ENCODE measurements at regions of chr2 and their contacts with region 1.

Region 1: DNA sequence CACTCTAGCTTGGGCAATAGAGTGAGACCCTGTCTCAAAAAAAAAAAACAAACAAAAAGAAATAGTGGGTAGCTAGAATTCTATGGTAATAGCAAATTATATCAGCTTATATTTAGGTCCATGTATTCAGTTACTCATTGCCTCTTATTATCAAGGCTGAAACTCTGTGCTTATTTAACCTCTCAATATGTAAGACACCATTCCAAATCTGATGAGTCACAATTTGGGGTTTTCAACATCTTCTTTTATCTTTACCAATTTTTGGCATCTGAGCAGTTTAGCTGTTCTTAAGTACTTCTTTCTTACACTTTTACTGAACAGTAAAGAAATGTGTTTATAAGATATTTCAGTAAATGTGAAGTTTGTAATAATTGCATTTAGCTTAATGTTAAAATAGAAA is 69.3 kb downstream of the TTC27 start:
- DNase-seq: no peak
- H3K4me3 ChIP-seq: no peak overlapping the region
- H3K27ac ChIP-seq: no peak overlapping the region
- H3K4me1 ChIP-seq: no peaks in the 10 kb centered on the region
- H3K27me3 ChIP-seq: no peaks in the 10 kb centered on the region
- CTCF ChIP-seq: no peak

Region 2: GRCh38 chr2:32222966-32223365 is 474.2 kb before region 1 on chr2:
- CTCF ChIA-PET with region 1: no interaction called
- POLR2A ChIA-PET with region 1: no interaction called
- intact Hi-C with region 1: no loop called
- DNase-seq: no peak
- H3K4me3 ChIP-seq: no peak overlapping the region
- H3K27ac ChIP-seq: no peak overlapping the region
- H3K4me1 ChIP-seq: no peaks in the 10 kb centered on the region
- H3K27me3 ChIP-seq: no peaks in the 10 kb centered on the region
- CTCF ChIP-seq: no peak

Region 3: GRCh38 chr2:32453242-32454062 is 243.7 kb before region 1 on chr2:
- CTCF ChIA-PET with region 1: no interaction called
- POLR2A ChIA-PET with region 1: interaction called, 14 read pairs
- intact Hi-C with region 1: no loop called
- DNase-seq: no peak
- H3K4me3 ChIP-seq: no peak overlapping the region
- H3K27ac ChIP-seq: no peak overlapping the region
- H3K4me1 ChIP-seq: no peaks in the 10 kb centered on the region
- H3K27me3 ChIP-seq: no peaks in the 10 kb centered on the region
- CTCF ChIP-seq: no peak

Region 4: DNA sequence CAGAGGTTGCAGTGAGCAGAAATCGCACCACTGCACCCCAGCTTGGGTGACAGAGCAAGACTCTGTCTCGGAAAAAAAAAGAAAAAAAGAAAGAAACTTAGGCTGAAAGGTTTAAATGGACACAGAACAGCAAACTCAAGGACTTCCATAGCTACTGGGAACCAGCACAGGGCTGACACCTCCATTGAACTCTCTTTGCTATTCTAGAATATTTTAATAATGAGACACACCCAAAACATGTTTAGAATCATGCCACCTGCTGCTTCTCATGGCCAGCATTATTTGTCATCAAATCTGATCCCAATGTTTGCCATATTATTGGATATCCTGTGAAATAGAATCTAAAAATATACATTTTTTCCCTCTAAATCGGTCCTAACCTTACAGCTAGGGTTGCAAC is 206.9 kb after region 1 on chr2:
- CTCF ChIA-PET with region 1: interaction called, 18 read pairs
- POLR2A ChIA-PET with region 1: no interaction called
- intact Hi-C with region 1: no loop called
- DNase-seq: no peak
- H3K4me3 ChIP-seq: no peak overlapping the region
- H3K27ac ChIP-seq: no peak overlapping the region
- H3K4me1 ChIP-seq: no peaks in the 10 kb centered on the region
- H3K27me3 ChIP-seq: no peaks in the 10 kb centered on the region
- CTCF ChIP-seq: no peak